Heart right ventricle (tissue), 16 donors: ENCODE measurements at regions of chr1 and their contacts with region 1.

Region 1: DNA sequence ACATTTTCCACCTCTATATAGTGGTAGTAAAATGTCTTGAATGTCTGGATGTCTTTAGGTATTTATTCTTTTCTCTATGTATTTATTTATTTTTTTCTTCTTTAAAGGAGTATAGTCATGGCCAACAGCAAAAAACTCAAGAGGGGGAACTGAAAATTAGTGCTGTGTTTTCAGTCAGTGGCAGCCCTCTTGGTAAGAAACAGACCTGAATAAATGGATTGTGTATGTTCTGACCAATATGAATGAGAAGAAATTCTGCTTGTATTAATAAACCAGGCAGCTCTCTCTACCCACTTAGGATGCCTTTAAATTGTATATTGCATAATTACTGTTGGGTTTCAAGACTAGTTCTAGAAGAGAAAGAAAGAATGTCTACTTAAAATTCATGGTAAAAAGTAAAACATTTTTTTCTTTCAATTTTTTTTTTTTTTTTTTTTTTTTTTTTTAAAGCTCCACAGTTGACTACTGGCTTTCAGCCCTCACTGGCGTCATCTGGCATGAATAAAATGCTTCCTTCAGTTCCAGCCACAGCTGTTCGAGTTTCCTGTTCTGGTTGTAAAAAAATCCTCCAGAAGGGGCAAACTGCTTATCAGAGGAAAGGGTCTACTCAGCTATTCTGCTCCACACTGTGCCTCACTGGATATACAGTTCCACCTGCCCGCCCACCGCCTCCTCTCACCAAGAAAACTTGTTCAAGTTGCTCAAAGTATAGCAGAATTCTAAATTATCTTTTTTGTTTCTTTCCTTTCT is 101.6 kb downstream of the ZMYM4 start:
- DNase-seq: peak; percentile 27 to 84
- ATAC-seq: peak; percentile 73 to 93 (median 88)
- H3K4me3 ChIP-seq: no peak overlapping the region
- H3K27ac ChIP-seq: peak overlapping the region in 8 of 10 donors; percentile 1 to 62 (median 34)
- H3K4me1 ChIP-seq: peaks cover 0 to 15% (median 12%) of the 10 kb centered on the region in 9 donors
- H3K27me3 ChIP-seq: no peaks in the 10 kb centered on the region
- CTCF ChIP-seq: peak in 2 of 9 donors; percentile 4 to 8

Region 2: DNA sequence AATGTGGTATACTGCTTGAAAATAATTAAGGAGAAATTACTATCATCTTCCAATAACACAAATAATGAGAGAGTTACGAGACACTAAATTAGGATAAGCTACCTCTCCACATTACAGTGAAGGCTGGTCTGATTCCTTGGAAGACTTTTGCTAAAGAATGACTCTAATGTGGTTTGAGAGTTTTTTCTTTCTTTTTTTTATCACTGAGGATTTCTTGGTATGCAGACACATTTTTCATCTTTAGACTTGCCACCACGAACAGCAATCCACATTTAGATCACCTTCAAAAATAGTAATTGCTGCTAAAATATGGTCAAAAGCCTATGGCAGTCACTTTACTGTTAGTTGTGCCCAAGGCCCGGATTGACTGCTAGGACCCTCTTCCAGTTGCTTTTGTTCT is 368.4 kb before region 1 on chr1:
- intact Hi-C with region 1: no loop called
- DNase-seq: no peak
- ATAC-seq: no peak
- H3K4me3 ChIP-seq: no peak overlapping the region
- H3K27ac ChIP-seq: no peak overlapping the region
- H3K4me1 ChIP-seq: no peaks in the 10 kb centered on the region
- H3K27me3 ChIP-seq: no peaks in the 10 kb centered on the region
- CTCF ChIP-seq: no peak

Region 3: DNA sequence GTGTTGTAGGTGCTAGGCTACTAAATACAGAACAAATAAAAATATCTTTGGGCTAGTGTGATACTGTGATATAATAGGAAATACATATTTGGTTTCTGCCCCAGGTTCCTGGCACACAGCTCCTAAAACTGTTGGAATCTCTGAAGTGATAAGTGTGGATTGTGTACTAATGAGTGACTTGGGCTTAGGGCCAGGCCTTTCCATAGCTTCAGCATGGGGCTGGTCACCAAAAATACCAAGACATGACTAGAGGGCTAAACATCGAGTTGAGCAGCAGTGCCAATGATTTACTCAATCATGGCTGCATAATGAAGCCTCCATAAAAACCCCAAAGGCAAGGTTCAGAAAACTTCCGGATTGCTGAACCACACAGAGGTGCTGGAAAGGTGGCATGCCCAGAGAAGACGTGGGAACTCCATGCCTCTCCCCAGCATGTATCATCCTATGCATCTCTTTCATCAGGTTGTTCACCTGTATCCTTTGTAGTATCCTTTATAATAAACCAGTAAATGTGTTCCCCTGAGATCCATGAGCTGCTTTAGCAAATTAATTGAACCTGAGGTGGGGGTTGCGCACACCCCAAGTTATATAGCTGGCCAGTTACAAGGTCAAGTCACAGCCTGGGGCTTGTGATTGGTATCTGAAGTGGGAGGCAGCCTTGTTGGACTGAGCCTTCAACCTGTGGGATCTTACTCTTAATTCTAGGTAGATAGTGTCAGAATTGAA is 49.9 kb before region 1 on chr1:
- intact Hi-C with region 1: loop called in 1 of 10 experiments (anchors 10 kb)
- DNase-seq: peak in 1 of 2 donors; percentile 66
- ATAC-seq: peak; percentile 69 to 97 (median 93)
- H3K4me3 ChIP-seq: peak overlapping the region in 4 of 10 donors; percentile 9 to 23 (median 11)
- H3K27ac ChIP-seq: peak overlapping the region; percentile 29 to 84 (median 72)
- H3K4me1 ChIP-seq: peaks cover 0 to 43% (median 15%) of the 10 kb centered on the region in 9 donors
- H3K27me3 ChIP-seq: no peaks in the 10 kb centered on the region
- CTCF ChIP-seq: no peak

Region 4: DNA sequence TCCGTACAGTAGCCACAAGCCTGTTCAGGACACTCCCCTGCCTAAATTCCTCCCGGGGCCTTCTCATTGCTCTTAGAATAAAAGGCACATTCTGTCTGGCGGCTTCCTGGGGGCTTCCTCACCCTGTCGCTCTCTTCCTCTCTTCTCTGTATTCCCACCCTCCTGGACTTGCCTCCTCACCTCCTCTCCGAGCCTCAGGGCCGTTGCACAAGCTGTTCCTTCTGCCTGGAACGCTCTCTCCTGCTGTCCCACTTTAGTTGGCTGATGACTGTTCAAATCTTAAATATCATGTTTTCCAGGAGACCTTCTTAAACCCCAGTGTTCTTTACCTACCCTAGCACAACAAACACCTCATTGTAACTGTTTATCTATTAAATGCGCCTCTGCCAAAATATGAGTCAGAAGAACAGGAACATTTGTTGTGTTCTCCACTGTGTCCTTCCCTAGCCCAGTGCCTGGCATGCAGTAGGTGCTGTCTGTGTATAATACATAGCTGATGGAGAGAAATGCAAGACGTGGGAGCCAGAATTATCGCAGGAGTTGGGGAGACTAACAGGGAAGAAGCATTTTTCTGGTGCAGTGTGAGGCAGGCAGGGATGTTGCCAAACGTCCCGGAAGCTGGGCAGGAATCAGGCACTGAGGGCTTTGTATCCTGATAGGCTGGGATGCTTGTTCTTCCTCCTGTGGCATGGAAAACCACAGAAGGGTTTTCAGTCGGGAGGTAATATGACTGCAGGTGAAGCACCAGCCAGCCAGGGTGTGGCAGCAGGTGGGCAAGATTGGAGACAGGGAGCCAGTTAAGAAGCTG is 830.0 kb after region 1 on chr1:
- intact Hi-C with region 1: no loop called
- DNase-seq: no peak
- ATAC-seq: peak in 6 of 8 donors; percentile 10 to 72 (median 36)
- H3K4me3 ChIP-seq: no peak overlapping the region
- H3K27ac ChIP-seq: peak overlapping the region; percentile 31 to 87 (median 62)
- H3K4me1 ChIP-seq: peaks cover 5 to 47% (median 24%) of the 10 kb centered on the region in 9 donors
- H3K27me3 ChIP-seq: no peaks in the 10 kb centered on the region
- CTCF ChIP-seq: no peak